ENCODE measurements at regions of chr18 and their contacts with region 1.

Region 1: DNA sequence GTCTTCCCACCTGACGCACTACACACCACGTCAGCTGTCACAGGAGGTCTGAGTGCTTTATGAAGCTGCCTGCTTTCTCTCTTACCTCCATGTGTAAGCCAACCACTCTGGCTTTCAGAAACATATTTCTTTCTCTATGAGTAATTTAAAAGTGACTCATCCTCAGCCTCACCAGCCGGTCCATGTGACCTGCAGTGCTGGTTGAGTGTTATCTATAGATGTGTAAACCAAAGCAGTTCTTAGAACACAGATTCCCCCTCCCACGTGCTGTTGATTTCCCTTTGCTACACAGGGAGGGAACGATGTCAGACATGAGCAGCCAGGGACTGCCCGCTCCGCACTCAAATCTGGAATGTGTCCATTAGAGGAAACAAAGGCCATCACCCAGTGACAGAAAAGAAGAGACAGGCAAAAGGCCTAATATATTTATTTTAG is 157.8 kb downstream of the BCL2 start:
- DNase-seq: peak; percentile 94
- H3K4me3 Mint-ChIP-seq: peak overlapping the region; percentile 83
- H3K27ac Mint-ChIP-seq: peak overlapping the region; percentile 98
- H3K4me1 Mint-ChIP-seq: peaks cover 87% of the 10 kb centered on the region
- H3K27me3 Mint-ChIP-seq: no peaks in the 10 kb centered on the region

Region 2: GRCh38 chr18:62357079-62357719 is 804.6 kb before region 1 on chr18:
- intact Hi-C with region 1: no loop called
- DNase-seq: no peak
- H3K4me3 Mint-ChIP-seq: no peak overlapping the region
- H3K27ac Mint-ChIP-seq: no peak overlapping the region
- H3K4me1 Mint-ChIP-seq: peaks cover 8% of the 10 kb centered on the region
- H3K27me3 Mint-ChIP-seq: no peaks in the 10 kb centered on the region

Region 3: GRCh38 chr18:63105636-63106316 is 56.0 kb before region 1 on chr18:
- intact Hi-C with region 1: loop called (anchors 1 kb)
- DNase-seq: no peak
- H3K4me3 Mint-ChIP-seq: peak overlapping the region; percentile 70
- H3K27ac Mint-ChIP-seq: peak overlapping the region; percentile 86
- H3K4me1 Mint-ChIP-seq: peaks cover 41% of the 10 kb centered on the region
- H3K27me3 Mint-ChIP-seq: peaks cover 9% of the 10 kb centered on the region

Region 4: DNA sequence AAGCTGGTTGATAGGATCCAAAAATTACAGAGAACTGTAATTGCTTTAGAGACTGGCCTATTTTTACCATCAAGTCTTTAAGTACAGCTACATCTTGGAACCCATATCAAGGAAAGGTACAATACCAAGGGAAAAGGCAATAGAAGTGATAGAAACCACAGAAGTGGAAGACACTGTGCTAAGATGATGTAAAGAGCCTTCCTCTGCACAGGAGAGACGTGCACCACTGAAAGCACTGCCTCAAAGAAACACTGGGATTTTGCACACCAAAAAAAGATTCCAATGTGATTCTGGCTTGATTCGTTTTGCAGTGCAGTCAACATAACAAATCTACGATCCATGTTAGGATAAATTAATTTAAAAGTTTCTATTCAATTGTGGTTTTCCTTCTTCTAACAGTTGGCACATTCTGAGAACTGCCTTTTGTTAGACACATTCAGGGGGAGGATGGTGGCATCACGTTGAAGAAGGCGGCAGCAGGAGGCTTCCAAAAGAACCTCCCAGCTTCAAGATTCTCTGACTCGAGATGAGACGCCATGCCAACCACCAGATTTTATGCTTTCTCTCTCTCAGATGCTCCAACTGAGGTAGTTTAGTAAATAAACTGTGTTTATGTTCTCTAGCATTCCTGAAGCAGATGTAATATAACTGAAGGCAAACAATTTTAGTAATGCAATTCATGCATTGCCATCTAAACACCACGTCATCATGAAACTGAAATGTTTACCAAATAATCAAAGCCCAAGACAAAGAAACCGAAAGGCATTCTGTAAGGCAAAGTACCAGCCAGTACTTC is 54.9 kb after region 1 on chr18:
- intact Hi-C with region 1: loop called (anchors 1 kb)
- DNase-seq: peak; percentile 79
- H3K4me3 Mint-ChIP-seq: peak overlapping the region; percentile 78
- H3K27ac Mint-ChIP-seq: peak overlapping the region; percentile 90
- H3K4me1 Mint-ChIP-seq: peaks cover 79% of the 10 kb centered on the region
- H3K27me3 Mint-ChIP-seq: no peaks in the 10 kb centered on the region

Region 5: DNA sequence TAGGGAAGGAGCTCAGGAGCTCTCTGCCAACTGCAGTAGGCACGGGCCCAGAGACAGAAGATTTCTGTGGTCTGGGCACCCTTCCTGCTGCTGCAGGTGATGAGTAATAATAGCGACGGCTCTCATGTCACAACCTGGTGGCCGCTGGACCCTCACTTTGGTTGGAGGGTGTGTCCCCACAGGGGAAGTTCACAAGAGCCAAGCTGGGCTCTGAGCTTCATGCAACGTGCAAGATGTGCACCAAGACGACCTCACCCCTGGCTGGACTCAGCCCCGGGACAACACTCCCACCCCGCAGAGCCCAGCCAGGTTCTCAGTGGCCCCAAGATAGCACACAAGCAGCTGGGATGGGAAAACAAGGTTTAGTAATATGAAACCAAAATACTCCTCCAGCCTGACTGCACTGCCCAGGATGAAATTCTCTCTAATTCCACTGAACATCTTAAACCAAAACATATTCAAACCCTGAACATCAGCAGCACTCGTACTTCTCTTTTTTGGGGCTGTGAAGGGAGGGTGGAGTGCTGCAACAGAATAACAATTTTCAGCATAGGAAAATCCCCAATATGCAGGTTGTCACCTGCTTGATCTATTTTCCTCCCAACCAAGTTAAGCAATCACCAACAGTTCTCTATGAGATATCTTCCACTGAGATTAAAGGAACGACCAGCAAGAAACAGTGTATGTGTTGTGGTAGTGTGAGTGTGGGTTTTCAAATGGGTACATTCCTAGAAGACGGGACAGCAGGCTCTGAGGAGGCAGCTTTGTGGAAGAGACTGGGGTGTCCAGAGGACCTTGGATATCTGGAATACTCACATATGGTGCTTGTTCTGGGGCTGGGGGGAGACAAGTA is 131.3 kb after region 1 on chr18:
- intact Hi-C with region 1: loop called (anchors 1 kb)
- DNase-seq: no peak
- H3K4me3 Mint-ChIP-seq: peak overlapping the region; percentile 56
- H3K27ac Mint-ChIP-seq: peak overlapping the region; percentile 83
- H3K4me1 Mint-ChIP-seq: peaks cover 62% of the 10 kb centered on the region
- H3K27me3 Mint-ChIP-seq: no peaks in the 10 kb centered on the region

Region 6: GRCh38 chr18:63367053-63367953 is 205.5 kb after region 1 on chr18 and contains the start of gene KDSR:
- intact Hi-C with region 1: loop called (anchors 1 kb)
- DNase-seq: peak; percentile 96
- H3K4me3 Mint-ChIP-seq: peak within 1 kb of the TSS; percentile 91
- H3K27ac Mint-ChIP-seq: peak within 1 kb of the TSS; percentile 81
- H3K4me1 Mint-ChIP-seq: peaks cover 29% of the 10 kb centered on the region
- H3K27me3 Mint-ChIP-seq: no peaks in the 10 kb centered on the region
- total RNA-seq, gene KDSR: 83.9 and 86.9 TPM in 2 replicates

Measured in activated CD4-positive, alpha-beta T cell treated with anti-CD3 and anti-CD28 coated beads, Interleukin-2, amount 10 ng/mL, durations not matched to agents 24 days and 14 days (primary cell).